ENCODE measurements at regions of chr1 and their contacts with region 1.

Region 1: DNA sequence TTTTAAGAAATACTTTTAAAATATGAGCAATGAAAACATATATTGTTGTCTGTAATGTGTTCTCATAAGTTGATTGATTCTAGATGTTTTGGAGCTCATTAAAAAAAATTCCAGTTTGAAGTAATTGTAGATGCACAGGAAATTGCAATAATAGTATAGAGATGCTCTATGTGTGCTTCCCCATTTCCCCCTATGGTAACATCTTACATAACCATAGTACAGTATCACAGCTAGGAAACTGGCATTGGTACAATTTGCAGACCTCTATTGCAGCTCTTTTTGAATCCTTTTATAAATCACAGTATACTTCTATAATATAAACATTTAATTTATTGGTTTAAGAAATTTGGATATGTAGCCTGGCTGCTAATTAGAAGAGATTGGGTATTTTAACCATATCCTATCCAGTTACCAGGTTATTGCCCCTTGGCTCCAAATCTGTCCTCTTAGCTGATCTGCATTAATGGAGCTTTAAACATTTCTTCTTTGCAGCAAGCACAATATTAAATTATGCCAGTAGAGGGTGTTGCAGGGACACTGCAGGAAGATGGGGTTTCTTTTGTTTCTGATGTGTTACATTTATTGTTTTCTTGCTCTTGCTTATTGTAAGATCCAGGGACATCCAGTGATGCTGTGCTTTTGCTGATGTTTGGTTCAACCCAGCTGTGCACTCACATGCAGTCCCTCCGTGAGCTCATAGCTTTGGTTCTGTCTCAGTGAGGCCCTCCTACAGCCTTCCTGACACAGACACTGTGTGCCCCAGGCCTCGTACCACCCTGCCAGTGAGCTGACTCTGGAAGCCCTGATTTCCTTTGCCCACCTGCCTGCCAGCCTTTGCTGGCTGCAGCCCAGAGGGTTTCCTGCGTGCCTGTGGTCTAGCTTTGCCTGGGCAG is 103.3 kb downstream of the RABGAP1L start:
- DNase-seq: no peak

Region 2: GRCh38 chr1:174230399-174230798 is 32.2 kb before region 1 on chr1:
- intact Hi-C with region 1: no loop called
- DNase-seq: no peak

Region 3: DNA sequence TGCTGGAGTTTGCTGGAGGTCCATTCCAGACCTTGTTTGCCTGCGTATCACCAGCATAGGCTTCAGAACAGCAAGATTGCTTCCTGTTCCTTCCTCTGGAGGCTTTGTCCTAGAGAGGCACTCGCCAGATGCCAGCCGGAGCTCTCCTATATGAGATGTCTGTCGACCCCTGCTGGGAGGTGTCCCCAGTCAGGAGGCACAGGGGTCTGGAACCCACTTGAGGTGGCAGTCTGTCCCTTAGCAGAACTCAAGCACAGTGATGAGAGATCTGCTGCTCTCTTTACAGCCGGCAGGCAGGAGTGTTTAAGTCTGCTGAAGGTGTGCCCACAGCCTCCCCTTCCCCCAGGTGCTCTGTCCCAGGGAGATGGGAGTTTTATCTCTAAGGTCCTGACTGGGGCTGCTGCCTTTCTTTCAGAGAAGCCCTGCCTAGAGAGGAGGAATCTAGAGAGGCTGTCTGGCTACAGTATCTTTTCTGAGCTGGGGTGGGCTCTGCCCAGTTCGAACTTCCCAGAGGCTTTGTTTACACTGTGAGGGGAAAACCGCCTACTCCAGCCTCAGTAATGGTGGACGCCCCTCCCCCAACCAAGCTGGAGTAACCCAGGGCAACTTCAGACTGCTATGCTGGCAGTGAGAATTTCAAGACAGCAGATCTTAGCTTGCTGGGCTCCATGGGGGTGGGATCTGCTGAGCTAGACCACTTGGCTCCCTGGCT is 390.1 kb after region 1 on chr1:
- intact Hi-C with region 1: no loop called
- DNase-seq: no peak

Region 4: DNA sequence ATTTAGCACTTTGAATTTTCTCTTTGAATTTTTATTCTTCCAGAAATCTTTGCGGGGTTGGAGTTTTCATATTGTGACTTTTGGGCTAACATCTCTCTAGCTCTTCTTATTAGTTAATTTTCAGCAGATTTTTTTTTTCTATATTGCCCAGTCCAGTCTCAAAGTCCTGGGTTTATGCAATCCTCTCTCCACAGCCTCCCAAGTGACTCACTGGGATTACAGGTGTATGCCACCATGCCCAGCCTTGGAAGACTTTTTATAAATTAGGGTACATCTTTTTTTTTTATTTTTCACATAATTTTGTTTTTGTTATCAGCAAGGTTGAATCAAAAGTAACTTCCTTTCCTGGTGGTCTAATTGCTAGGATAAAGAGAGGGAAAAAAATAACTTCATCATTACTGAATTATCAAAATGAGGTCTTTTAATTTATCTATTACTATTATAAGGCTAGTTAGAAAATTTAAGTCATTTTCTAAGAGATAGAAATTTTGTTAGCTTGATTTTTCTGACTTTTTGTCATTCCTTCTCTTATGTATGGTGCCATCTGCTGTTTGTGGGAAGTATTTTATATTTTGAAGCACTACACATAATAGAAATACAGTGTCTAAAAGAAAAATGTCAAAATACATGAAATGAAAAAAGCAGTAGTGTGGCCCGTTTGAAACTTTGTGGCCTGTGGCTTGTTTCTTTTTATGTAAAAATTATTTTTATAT is 463.7 kb after region 1 on chr1:
- intact Hi-C with region 1: loop called (anchors 5 kb)
- DNase-seq: no peak

Region 5: DNA sequence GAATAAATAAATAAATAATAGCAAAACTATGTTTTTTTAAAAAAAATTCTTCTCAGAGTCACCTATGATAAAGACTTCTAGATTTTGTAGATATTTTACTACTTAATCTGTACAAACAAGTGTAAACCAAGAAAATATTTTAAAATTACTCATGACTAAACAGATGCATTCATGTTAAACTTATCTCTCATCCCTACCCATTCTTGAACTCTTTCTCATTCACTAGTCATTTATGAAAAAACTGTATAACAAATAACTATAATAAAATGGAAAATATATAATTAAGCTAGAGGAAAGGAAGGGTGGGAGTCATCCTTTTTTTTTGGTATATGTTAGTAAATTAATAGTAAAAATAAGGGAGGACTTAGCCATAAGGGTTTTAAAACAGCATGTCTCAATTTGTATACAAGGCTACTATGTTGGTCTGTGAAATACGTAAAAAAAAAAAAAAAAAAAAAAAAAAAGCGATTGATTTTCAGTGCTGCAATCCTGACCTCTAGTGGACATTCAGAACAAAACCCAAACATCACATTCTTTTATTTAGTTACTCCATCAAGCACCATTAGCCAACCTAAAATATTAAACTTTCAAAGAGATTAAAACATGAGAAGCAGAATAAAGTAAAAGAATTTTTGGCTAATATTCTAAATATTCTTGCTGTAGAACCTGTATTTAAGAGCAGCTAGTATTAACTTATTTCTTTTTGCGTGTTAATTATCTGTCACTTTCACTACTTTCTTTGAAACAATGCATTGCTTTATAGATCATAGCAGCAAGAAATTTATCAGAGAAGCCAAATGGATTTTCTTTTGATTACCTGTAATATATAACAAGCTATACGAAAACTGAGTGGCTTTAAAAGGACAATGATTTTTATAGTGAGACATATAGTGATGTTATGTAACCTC is 481.3 kb after region 1 on chr1:
- intact Hi-C with region 1: loop called (anchors 2 kb)
- DNase-seq: no peak

Region 6: GRCh38 chr1:174999216-174999925 is 736.8 kb after region 1 on chr1:
- intact Hi-C with region 1: loop called (anchors 10 kb)
- DNase-seq: peak; percentile 99

Region 7: DNA sequence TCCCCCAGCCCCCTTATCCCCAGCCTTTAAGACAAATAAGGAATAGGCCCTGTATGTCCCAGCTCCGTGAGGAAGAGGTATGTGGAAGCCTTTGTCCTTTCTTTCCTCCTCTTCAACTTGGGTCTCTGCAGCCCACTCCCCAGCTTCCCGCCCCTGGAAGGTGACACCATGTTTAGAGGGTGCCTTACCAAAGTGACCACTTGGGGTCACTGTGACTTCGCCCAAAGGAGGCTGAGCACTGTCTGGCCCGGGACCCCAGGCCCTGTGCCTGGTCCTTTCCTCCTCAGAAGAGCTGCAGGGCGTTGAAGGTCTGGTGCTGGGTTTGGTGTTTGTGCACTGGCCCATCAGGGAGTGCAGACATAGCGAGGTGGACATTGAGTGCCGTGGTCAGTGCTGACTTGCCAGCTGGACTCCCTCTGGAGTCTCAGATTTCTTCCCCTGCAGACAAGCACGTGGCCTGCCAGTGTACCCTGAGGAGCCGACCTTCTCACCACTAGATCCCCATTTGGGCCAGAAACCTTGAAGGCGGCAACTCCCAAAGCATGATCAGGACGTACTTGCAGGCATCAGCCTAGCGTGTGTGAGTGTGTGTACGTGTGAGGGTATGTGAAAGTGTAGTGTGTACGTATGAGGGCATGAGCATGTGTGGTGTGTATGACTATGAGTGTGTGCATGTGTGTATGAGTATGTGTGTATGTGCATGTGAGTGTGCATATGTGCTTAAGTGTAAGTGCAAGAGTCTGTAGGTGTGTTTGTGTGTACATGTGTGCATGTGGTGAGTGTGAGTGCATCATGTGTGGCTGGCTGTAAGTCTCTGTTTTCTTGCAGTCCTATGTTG is 1111.4 kb after region 1 on chr1:
- intact Hi-C with region 1: no loop called
- DNase-seq: no peak